Activated T-helper 2 cell treated with anti-CD3 and anti-CD28 coated beads, Interferon-gamma antibody, Interleukin-2, Interleukin-4, amounts not matched to agents 10 μg/mL and 5 μg/mL and 100 μg/mL, durations not matched to agents 14 hours and 24 hours and 36 hours (primary cell): ENCODE measurements at regions of chr1 and their contacts with region 1.

Region 1: GRCh38 chr1:156226116-156226538 is 13.3 kb downstream of the PMF1 start:
- DNase-seq: no peak
- H3K4me3 Mint-ChIP-seq: no peak overlapping the region
- H3K27ac Mint-ChIP-seq: peak overlapping the region; percentile 83
- H3K4me1 Mint-ChIP-seq: peaks cover 50% of the 10 kb centered on the region
- H3K27me3 Mint-ChIP-seq: no peaks in the 10 kb centered on the region

Region 2: GRCh38 chr1:156090822-156091188 is 135.3 kb before region 1 on chr1:
- intact Hi-C with region 1: loop called (anchors 1 kb)
- DNase-seq: peak; percentile 76
- H3K4me3 Mint-ChIP-seq: no peak overlapping the region
- H3K27ac Mint-ChIP-seq: no peak overlapping the region
- H3K4me1 Mint-ChIP-seq: peaks cover 6% of the 10 kb centered on the region
- H3K27me3 Mint-ChIP-seq: peaks cover 20% of the 10 kb centered on the region

Region 3: GRCh38 chr1:156146020-156146768 is 79.9 kb before region 1 on chr1:
- intact Hi-C with region 1: loop called (anchors 1 kb)
- DNase-seq: peak; percentile 35
- H3K4me3 Mint-ChIP-seq: peak overlapping the region; percentile 18
- H3K27ac Mint-ChIP-seq: peak overlapping the region; percentile 76
- H3K4me1 Mint-ChIP-seq: peaks cover 36% of the 10 kb centered on the region
- H3K27me3 Mint-ChIP-seq: no peaks in the 10 kb centered on the region

Region 4: DNA sequence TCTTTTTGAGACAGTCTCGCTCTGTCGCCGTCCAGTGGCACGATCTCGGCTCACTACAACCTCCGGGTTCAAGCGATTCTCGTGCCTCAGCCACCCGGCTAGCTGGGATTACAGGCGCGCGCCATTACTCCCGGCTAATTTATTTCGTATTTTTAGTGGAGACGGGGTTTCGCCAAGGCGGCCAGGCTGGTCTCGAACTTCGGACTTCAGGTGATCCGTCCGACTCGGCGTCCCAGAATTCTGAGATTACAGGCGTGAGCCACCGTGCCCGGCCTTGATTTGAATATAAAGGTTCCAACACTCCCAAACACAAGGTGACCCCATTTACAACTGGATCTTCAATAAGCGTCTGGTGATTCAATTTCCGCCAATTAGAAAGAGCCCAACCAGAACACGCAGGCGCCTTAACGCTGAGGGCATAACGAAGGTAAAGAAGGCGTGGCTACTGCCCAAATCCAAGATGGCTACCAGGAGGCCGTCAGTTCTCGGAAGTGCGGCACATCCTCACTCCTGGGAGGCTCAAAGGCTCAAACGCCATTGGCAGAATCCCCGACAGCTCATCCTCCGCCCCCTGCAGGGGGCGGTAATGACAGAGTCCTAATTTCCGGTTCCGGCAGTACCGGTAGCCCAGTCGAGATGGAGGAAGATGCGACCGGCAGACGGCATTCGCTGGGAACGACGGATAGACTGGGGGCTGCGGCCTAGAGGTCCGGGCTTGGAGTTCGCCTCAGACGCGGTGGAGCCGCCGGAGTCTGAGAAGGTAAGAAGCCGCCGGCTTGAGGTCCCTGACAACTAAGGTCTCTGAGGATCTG is 32.4 kb before region 1 on chr1 and contains the start of gene SLC25A44:
- intact Hi-C with region 1: loop called (anchors 1 kb)
- DNase-seq: peak; percentile 97
- H3K4me3 Mint-ChIP-seq: peak within 1 kb of the TSS; percentile 95
- H3K27ac Mint-ChIP-seq: peak within 1 kb of the TSS; percentile 91
- H3K4me1 Mint-ChIP-seq: peaks cover 54% of the 10 kb centered on the region
- H3K27me3 Mint-ChIP-seq: no peaks in the 10 kb centered on the region
- total RNA-seq, gene SLC25A44: 62.6 and 63.7 TPM in 2 replicates

Region 5: GRCh38 chr1:156212833-156213643 is 13.1 kb before region 1 on chr1 and contains the start of gene PMF1:
- intact Hi-C with region 1: loop called (anchors 1 kb)
- DNase-seq: peak; percentile 95
- H3K4me3 Mint-ChIP-seq: peak within 1 kb of the TSS; percentile 93
- H3K27ac Mint-ChIP-seq: peak within 1 kb of the TSS; percentile 98
- H3K4me1 Mint-ChIP-seq: peaks cover 31% of the 10 kb centered on the region
- H3K27me3 Mint-ChIP-seq: no peaks in the 10 kb centered on the region
- total RNA-seq, gene PMF1: 115 and 117 TPM in 2 replicates

Region 6: DNA sequence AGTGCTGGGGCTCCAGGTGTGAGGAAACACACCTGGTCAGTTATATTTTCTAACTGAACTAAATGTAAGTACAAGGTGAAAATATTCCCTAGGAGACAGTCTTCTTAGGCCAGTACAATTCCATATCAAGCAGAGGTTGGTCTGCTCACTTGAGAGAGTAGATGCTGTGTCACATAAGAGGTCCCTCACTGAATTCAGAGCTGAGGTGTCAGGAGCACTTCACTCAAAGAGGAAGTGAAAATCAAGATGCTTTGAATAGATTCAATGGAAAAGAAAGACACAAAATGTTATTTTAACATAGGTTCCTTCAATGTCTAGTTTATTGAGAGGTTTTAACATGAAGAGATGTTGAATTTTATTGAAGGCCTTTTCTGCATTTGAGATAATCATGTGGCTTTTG is 1478.8 kb after region 1 on chr1:
- intact Hi-C with region 1: no loop called
- DNase-seq: no peak
- H3K4me3 Mint-ChIP-seq: no peak overlapping the region
- H3K27ac Mint-ChIP-seq: no peak overlapping the region
- H3K4me1 Mint-ChIP-seq: no peaks in the 10 kb centered on the region
- H3K27me3 Mint-ChIP-seq: no peaks in the 10 kb centered on the region